ENCODE measurements at regions of chr7 and their contacts with region 1.

Region 1: GRCh38 chr7:17402628-17403278 is 104.3 kb downstream of the AHR start:
- DNase-seq: peak; percentile 90
- ATAC-seq: peak; percentile 91
- H3K4me3 ChIP-seq: peak overlapping the region; percentile 49
- H3K27ac ChIP-seq: peak overlapping the region; percentile 77
- H3K4me1 ChIP-seq: peaks cover 23% of the 10 kb centered on the region
- H3K27me3 ChIP-seq: no peaks in the 10 kb centered on the region
- CTCF ChIP-seq: no peak
- EP300 ChIP-seq: peak; percentile 24 to 60; a peak in 3 of 4 replicates
- POLR2A ChIP-seq: no peak
- RAD21 ChIP-seq: no peak

Region 2: DNA sequence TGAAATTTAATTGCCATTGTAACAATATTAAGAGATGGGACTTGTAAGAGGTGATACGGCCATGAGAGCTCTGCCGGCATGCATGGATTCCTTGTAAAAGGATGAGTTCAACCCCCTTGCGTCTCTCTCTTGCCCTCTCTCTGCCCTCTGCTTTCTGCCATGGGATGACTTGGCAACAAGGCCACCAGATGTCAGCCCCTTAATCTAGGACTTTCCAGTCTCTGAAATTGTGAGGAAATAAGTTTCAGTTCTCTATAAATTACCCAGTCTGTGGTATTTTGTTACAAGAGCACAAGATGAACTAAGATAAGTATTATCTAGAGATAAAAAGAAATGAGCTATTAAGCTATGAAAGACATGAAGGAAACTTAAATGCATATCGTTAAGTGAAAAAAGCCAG is 250.0 kb before region 1 on chr7:
- CTCF ChIA-PET with region 1: no interaction called
- POLR2A ChIA-PET with region 1: no interaction called
- RAD21 ChIA-PET with region 1: no interaction called
- SMC1A ChIA-PET with region 1: interaction called, 5 read pairs
- in situ Hi-C with region 1: no loop called
- intact Hi-C with region 1: loop called (anchors 5 kb)
- DNase-seq: no peak
- ATAC-seq: peak; percentile 80
- H3K4me3 ChIP-seq: no peak overlapping the region
- H3K27ac ChIP-seq: no peak overlapping the region
- H3K4me1 ChIP-seq: peaks cover 29% of the 10 kb centered on the region
- H3K27me3 ChIP-seq: no peaks in the 10 kb centered on the region
- CTCF ChIP-seq: no peak
- EP300 ChIP-seq: peak; percentile 41 to 55; a peak in 2 of 4 replicates
- POLR2A ChIP-seq: no peak
- RAD21 ChIP-seq: peak; percentile 29; the same call in 1 of the 2 replicates

Region 3: DNA sequence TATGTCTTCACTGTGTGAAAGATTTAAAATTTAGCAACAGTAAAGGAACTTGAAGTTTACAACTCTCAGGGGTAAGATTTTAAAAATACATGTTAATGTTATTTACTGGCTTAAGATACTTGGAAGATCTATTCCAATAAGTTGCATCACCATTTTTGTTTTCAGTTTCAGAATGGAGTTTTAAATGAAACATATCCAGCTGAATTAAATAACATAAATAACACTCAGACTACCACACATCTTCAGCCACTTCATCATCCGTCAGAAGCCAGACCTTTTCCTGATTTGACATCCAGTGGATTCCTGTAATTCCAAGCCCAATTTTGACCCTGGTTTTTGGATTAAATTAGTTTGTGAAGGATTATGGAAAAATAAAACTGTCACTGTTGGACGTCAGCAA is 60.0 kb before region 1 on chr7:
- CTCF ChIA-PET with region 1: no interaction called
- POLR2A ChIA-PET with region 1: interaction called, 6 read pairs
- RAD21 ChIA-PET with region 1: interaction called, 5 read pairs
- SMC1A ChIA-PET with region 1: interaction called, 6 read pairs
- in situ Hi-C with region 1: no loop called
- intact Hi-C with region 1: loop called (anchors 5 kb)
- DNase-seq: no peak
- ATAC-seq: no peak
- H3K4me3 ChIP-seq: no peak overlapping the region
- H3K27ac ChIP-seq: no peak overlapping the region
- H3K4me1 ChIP-seq: no peaks in the 10 kb centered on the region
- H3K27me3 ChIP-seq: no peaks in the 10 kb centered on the region
- CTCF ChIP-seq: no peak
- EP300 ChIP-seq: no peak
- POLR2A ChIP-seq: no peak
- RAD21 ChIP-seq: no peak

Region 4: GRCh38 chr7:17380736-17381662 is 21.8 kb before region 1 on chr7:
- CTCF ChIA-PET with region 1: interaction called, 9 read pairs
- POLR2A ChIA-PET with region 1: interaction called, 8 read pairs
- RAD21 ChIA-PET with region 1: interaction called, 7 read pairs
- SMC1A ChIA-PET with region 1: interaction called, 23 read pairs
- in situ Hi-C with region 1: no loop called
- intact Hi-C with region 1: loop called (anchors 1 kb)
- DNase-seq: no peak
- ATAC-seq: no peak
- H3K4me3 ChIP-seq: no peak overlapping the region
- H3K27ac ChIP-seq: no peak overlapping the region
- H3K4me1 ChIP-seq: peaks cover 2% of the 10 kb centered on the region
- H3K27me3 ChIP-seq: no peaks in the 10 kb centered on the region
- CTCF ChIP-seq: no peak
- EP300 ChIP-seq: no peak
- POLR2A ChIP-seq: no peak
- RAD21 ChIP-seq: no peak

Region 5: DNA sequence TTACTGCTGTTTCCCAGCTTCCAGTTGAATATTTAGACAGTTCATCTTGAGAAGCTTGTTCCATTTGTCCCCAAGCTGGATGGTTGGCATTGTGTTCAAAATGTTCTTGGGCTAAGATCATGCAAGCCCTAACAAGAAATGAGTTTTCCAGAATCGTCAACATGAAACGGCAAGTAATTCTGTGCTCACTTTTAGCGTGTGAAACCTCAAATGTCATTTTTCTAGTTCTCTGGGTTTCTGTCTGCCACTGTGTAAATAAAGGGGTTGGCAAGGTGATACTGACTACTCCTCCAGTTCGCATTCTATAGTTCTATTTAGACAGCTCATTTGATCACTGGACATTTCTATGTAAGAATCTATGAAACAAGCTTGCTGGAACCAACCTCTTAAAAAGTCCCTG is 89.7 kb after region 1 on chr7:
- CTCF ChIA-PET with region 1: interaction called, 8 read pairs
- POLR2A ChIA-PET with region 1: interaction called, 3 read pairs
- RAD21 ChIA-PET with region 1: interaction called, 11 read pairs
- SMC1A ChIA-PET with region 1: interaction called, 22 read pairs
- in situ Hi-C with region 1: no loop called
- intact Hi-C with region 1: loop called (anchors 5 kb)
- DNase-seq: peak; percentile 41
- ATAC-seq: peak; percentile 83
- H3K4me3 ChIP-seq: no peak overlapping the region
- H3K27ac ChIP-seq: no peak overlapping the region
- H3K4me1 ChIP-seq: no peaks in the 10 kb centered on the region
- H3K27me3 ChIP-seq: no peaks in the 10 kb centered on the region
- CTCF ChIP-seq: no peak
- EP300 ChIP-seq: peak; percentile 77 to 95
- POLR2A ChIP-seq: no peak
- RAD21 ChIP-seq: no peak